ENCODE measurements at regions of chr10 and their contacts with region 1.

Region 1: DNA sequence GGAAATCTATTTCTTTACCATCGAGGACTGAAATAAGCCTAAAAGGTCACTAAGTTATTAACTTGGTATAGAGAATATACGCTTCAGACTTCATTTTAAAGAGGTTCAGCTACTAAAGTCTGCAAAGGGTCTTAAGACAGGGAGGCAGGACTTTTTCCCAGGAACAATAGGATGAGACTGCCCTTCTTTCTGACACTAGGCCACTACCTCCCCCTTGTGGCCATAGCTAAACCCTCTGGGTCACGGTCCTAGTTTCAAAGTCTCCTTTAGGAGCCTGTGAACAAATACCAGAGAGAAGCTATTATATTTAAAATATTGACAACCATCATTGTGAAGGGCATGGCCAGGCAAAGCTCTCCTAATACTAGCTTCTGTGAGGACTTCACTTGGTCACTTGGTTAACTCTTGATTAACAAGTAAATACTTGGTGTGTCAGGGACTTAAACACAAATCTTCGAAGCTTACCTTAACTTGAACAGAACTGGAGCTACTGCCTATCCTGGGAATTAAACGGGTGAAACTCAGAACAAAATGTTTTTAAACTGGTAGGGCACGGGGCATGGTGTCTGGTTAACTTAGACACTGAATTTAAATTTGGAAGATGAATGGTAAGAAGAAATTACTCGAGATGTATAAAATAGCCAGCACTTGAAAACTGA is 75.6 kb downstream of the CCDC6 start:
- DNase-seq: no peak
- H3K4me3 ChIP-seq: no peak overlapping the region
- H3K27ac ChIP-seq: no peak overlapping the region
- H3K4me1 ChIP-seq: peaks cover 5 to 8% of the 10 kb centered on the region in 2 donors
- H3K27me3 ChIP-seq: no peaks in the 10 kb centered on the region
- CTCF ChIP-seq: peak in 2 of 3 experiments; percentile 70 to 81

Region 2: DNA sequence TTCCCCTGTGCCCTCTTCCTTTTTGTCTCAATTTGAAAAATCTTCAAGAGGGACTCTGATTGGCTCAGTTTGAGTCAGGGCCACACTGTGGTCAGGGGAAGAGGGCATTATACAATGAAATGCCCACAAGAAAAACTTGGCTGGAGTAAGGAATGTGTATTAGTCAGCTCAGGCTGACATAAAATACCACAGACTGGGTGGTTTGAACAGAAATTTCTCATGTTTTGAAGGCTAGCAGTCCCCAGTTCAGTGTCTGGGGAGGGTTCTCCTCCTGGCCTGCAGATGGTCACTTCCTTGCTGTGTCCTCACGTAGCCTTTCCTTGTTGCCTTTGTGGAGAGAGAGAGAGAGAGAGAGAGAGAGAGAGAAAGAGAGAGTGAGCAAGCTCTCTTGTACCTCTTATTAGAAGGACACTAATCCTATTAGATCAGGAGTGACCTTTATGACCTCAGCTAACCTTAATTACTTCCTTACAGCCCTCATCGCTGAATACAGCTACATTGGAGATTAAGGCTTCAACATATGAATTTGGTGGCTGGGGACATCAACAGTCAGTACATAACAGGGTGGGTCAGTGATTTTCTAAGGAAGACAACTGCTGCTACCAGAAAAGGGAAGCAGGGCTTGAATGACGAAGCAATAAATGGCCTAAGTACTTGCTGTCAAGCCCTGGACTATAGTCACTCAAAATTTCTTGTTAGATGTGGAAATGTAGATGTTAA is 442.6 kb before region 1 on chr10:
- intact Hi-C with region 1: loop called (anchors 10 kb)
- DNase-seq: no peak
- H3K4me3 ChIP-seq: no peak overlapping the region
- H3K27ac ChIP-seq: peak overlapping the region; percentile 79 to 89
- H3K4me1 ChIP-seq: peaks cover 0 to 6% of the 10 kb centered on the region in 2 donors
- H3K27me3 ChIP-seq: no peaks in the 10 kb centered on the region
- CTCF ChIP-seq: no peak

Region 3: DNA sequence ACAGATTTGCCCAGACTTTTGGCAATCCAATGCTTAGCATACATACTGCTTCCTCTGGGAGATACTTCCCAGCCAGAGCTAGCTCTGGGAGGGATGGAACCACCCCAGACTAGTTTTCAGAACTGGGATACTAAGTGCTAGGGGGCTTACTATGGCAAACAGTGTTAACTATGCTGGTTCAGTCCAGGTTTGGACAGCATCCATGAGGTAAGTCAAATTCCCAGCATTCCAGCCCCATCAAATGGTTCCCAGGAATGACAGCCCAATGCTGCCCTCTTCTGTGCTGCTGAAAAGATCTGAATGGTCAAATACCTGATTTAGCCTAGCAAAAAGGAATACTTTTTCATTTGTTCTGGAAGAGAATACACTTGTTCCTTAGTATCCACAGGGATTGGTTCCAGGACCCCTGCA is 217.4 kb after region 1 on chr10:
- intact Hi-C with region 1: loop called (anchors 10 kb)
- DNase-seq: no peak
- H3K4me3 ChIP-seq: no peak overlapping the region
- H3K27ac ChIP-seq: no peak overlapping the region
- H3K4me1 ChIP-seq: peaks cover 7 to 9% of the 10 kb centered on the region in 2 donors
- H3K27me3 ChIP-seq: no peaks in the 10 kb centered on the region
- CTCF ChIP-seq: peak; percentile 28 to 44 (median 41)

Measured in ascending aorta (tissue), 2 donors.